ENCODE measurements at regions of chr1 and their contacts with region 1.

Region 1: DNA sequence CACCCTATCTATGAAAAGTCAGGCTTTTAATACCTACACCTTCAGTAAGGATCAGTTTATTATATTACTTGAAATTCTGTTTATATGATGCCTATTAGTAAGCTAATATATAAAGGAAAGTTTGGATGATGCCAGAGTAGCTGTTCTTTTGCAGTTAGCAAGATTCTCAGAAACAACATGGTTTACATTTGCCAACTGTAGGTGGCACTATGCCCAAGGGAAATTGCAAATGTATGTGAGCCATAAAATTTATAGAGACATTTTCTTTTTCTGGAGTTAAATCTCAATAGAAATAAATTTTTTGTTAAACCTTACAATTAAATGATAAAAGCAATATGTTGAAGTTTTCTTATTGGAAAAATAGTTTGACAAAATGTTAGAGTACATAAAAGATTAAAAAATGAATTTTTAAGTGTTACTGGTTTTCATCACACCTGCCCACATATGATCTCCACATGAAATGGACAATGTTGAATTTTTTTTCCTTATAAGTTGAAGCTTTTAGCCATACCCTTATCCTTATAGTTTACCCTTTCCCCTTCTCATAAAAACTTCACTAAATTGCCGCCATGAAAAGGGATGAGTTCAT is 32.1 kb upstream of the EPHX4 start:
- DNase-seq: peak in 30 of 35 experiments; percentile 1 to 80 (median 36)
- ATAC-seq: peak in 1 of 4 experiments; percentile 59
- H3K4me3 ChIP-seq: no peak overlapping the region
- H3K4me3 Mint-ChIP-seq: no peak overlapping the region
- H3K27ac ChIP-seq: no peak overlapping the region
- H3K27ac Mint-ChIP-seq: no peak overlapping the region
- H3K4me1 ChIP-seq: no peaks in the 10 kb centered on the region
- H3K4me1 Mint-ChIP-seq: no peaks in the 10 kb centered on the region
- H3K27me3 ChIP-seq: no peaks in the 10 kb centered on the region
- H3K27me3 Mint-ChIP-seq: peaks cover 0 to 2% of the 10 kb centered on the region in 2 donors

Region 2: GRCh38 chr1:92291372-92291999 is 293.8 kb after region 1 on chr1:
- CTCF ChIA-PET with region 1: interaction called, 14 to 27 read pairs
- POLR2A ChIA-PET with region 1: interaction called in 1 of 2 experiments, 3 read pairs
- DNase-seq: peak in 1 of 35 experiments; percentile 51
- ATAC-seq: no peak
- H3K4me3 ChIP-seq: no peak overlapping the region
- H3K4me3 Mint-ChIP-seq: no peak overlapping the region
- H3K27ac ChIP-seq: no peak overlapping the region
- H3K27ac Mint-ChIP-seq: no peak overlapping the region
- H3K4me1 ChIP-seq: no peaks in the 10 kb centered on the region
- H3K4me1 Mint-ChIP-seq: peaks cover 24 to 32% (median 25%) of the 10 kb centered on the region in 3 donors
- H3K27me3 ChIP-seq: no peaks in the 10 kb centered on the region
- H3K27me3 Mint-ChIP-seq: no peaks in the 10 kb centered on the region

Region 3: GRCh38 chr1:92623187-92623778 is 625.6 kb after region 1 on chr1:
- CTCF ChIA-PET with region 1: interaction called, 10 to 13 read pairs
- POLR2A ChIA-PET with region 1: no interaction called
- DNase-seq: peak in 1 of 35 experiments; percentile 55
- ATAC-seq: peak in 2 of 4 experiments; percentile 42 to 69
- H3K4me3 ChIP-seq: no peak overlapping the region
- H3K4me3 Mint-ChIP-seq: no peak overlapping the region
- H3K27ac ChIP-seq: no peak overlapping the region
- H3K27ac Mint-ChIP-seq: no peak overlapping the region
- H3K4me1 ChIP-seq: no peaks in the 10 kb centered on the region
- H3K4me1 Mint-ChIP-seq: no peaks in the 10 kb centered on the region
- H3K27me3 ChIP-seq: no peaks in the 10 kb centered on the region
- H3K27me3 Mint-ChIP-seq: no peaks in the 10 kb centered on the region

Measured in T-cell (primary cell).